Gastrocnemius medialis (tissue), 4 donors: ENCODE measurements at regions of chr1 and their contacts with region 1.

Region 1: GRCh38 chr1:39653546-39654031 is 14.1 kb upstream of the HEYL start:
- DNase-seq: peak; percentile 90 to 96
- ATAC-seq: peak; percentile 94 to 95
- H3K4me3 ChIP-seq: no peak overlapping the region
- H3K27ac ChIP-seq: peak overlapping the region; percentile 76 to 85 (median 80)
- H3K4me1 ChIP-seq: peaks cover 22 to 32% of the 10 kb centered on the region in 2 donors
- H3K27me3 ChIP-seq: no peaks in the 10 kb centered on the region
- CTCF ChIP-seq: peak; percentile 94 to 96 (median 96)
- POLR2A ChIP-seq: no peak

Region 2: GRCh38 chr1:39446986-39447567 is 206.5 kb before region 1 on chr1:
- in situ Hi-C with region 1: no loop called
- intact Hi-C with region 1: no loop called
- DNase-seq: no peak
- ATAC-seq: no peak
- H3K4me3 ChIP-seq: no peak overlapping the region
- H3K27ac ChIP-seq: no peak overlapping the region
- H3K4me1 ChIP-seq: no peaks in the 10 kb centered on the region
- H3K27me3 ChIP-seq: no peaks in the 10 kb centered on the region
- CTCF ChIP-seq: no peak
- POLR2A ChIP-seq: no peak

Region 3: DNA sequence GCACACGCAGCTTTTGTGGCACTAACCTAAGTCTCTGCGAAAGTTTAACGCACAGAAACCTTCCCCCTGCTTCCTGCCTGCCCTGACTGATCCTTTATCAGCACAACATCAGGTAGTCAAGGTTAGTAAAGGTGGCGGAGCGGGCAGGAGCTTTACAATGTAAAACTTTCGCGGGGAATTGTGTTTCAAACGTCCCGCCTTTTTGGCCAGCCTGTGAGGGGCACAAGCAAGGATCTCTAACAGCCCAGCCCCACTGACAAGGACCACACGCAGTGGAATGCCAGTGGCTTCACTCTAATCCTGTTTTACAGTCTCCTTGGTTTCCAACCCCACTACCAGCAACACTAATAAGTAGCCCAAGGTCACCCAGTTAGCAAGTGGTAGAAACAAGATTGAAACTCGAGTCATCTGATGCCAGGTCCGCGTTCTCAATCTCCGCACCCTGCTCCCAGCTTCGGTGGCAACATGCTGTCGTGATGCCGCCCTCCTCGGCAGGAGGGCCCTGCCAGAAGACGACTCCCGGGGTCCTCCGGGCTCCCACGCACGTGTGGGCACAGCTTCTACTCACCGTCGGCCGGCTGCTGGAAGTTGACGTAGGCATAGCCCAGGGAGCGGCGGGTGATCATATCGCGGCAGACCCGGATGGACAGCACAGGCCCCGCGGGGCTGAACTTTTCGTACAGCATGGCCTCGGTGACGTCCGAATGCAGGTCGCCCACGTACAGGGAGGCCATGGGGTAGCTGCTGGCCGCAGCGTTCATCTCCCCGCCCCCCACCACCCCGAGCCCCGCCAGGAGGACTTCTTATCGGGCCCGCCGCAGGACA is 78.2 kb before region 1 on chr1:
- in situ Hi-C with region 1: no loop called
- intact Hi-C with region 1: loop called (anchors 1 kb)
- DNase-seq: peak; percentile 63 to 69
- ATAC-seq: peak; percentile 9 to 28
- H3K4me3 ChIP-seq: peak overlapping the region; percentile 70 to 96 (median 78)
- H3K27ac ChIP-seq: peak overlapping the region; percentile 93 to 99 (median 96)
- H3K4me1 ChIP-seq: peaks cover 33% of the 10 kb centered on the region in 2 donors
- H3K27me3 ChIP-seq: no peaks in the 10 kb centered on the region
- CTCF ChIP-seq: no peak
- POLR2A ChIP-seq: peak in 1 of 2 donors; percentile 39

Region 4: DNA sequence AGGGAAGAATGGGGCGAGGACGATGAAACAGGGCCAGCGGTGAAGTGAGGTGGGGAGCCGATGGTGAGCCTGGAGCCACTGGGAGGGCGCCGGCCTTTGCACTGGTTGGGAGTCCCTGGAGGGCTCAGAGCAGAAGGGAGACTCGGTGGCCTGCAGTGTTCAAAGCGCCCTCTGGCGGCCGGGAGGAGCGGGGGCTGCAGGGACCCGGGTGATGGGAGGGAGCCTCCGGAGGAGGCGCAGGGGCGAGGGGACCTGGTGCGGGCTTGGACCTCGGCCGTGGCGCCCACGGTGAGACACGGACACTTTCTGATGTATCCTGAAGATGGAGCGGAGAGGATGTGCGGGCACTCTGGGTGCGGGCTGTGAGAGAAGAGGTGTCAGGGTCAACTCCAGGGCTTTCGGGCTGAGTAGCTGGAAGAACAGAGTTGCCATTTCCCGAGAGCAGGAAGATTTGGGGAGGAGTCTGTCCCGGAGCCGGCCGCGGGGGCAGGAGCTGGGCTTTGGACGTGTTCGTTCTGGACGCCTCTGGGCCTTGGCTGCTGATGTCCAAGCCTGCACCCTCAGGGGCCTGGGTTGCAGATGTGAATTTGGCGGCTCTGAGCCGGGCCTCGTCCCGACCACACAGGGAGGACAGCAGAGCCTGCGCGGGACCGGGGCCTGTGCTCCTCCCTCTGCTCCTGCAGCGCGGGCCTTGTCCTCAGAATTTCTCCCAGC is 43.8 kb before region 1 on chr1:
- in situ Hi-C with region 1: loop called (anchors 5 to 10 kb)
- intact Hi-C with region 1: loop called (anchors 1 kb)
- DNase-seq: peak; percentile 7 to 24
- ATAC-seq: no peak
- H3K4me3 ChIP-seq: no peak overlapping the region
- H3K27ac ChIP-seq: peak overlapping the region in 1 of 4 donors; percentile 1
- H3K4me1 ChIP-seq: peaks cover 0 to 4% of the 10 kb centered on the region in 2 donors
- H3K27me3 ChIP-seq: no peaks in the 10 kb centered on the region
- CTCF ChIP-seq: peak in 4 of 5 experiments; percentile 52 to 77 (median 68)
- POLR2A ChIP-seq: no peak

Region 5: DNA sequence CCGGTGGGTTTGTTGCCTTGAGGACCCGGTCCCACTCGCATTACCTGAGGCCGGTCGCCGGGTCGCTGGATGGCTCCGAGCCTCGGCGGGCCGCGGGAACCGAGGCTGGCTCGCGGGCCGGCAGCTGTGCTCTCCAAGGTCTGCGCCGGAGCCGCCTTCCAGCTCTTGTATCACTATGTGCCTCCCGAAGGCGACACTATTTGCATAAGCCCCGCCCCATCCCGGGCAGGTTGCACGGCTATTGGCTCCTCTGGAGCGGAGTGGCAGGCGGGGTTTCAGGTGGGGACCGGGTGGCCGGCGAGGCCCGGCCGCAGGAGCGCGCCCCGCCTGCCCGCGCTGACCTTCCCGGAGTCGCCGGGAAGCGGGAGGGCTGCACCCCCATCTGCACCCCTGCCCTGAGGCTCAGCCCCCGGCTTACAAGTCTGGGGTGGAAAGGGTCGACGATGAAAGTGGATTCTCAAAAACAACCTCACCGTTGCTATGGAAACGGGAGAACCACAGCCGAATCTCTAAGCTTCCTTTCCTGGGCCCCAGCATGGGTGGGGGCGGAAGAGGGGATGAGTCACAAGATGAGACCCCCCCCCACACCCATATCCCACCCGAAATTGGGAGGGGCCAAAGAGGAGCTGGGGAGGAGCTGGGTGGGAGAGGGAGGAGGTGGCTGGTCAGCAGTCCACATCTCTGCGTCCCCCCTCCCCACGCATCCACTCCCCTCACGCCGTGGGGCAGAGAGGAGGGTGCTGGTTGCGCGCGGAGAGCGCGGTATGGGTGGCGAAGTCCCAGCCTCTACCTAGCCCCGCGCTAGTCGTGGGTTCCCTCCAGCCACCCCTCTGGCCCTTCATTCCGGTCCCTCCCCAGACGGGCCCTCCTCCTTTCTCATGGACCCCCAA is 37.9 kb after region 1 on chr1 and contains the start of gene HPCAL4:
- in situ Hi-C with region 1: no loop called
- intact Hi-C with region 1: loop called (anchors 1 kb)
- DNase-seq: peak; percentile 91 to 95
- ATAC-seq: peak; percentile 62 to 66
- H3K4me3 ChIP-seq: peak within 1 kb of the TSS; percentile 47 to 60 (median 51)
- H3K27ac ChIP-seq: peak within 1 kb of the TSS in 3 of 4 donors; percentile 39 to 99 (median 91)
- H3K4me1 ChIP-seq: peaks cover 40 to 44% of the 10 kb centered on the region in 2 donors
- H3K27me3 ChIP-seq: peaks cover 0 to 3% (median 0%) of the 10 kb centered on the region in 3 donors
- CTCF ChIP-seq: no peak
- POLR2A ChIP-seq: peak; percentile 80 to 89
- total RNA-seq, gene HPCAL4: 0.92 to 9.0 (median 3.2) TPM

Region 6: GRCh38 chr1:39720094-39720999 is 66.8 kb after region 1 on chr1:
- in situ Hi-C with region 1: loop called in 1 of 4 experiments (anchors 5 kb)
- intact Hi-C with region 1: loop called (anchors 1 kb)
- DNase-seq: peak; percentile 42 to 46
- ATAC-seq: peak; percentile 98 to 99
- H3K4me3 ChIP-seq: no peak overlapping the region
- H3K27ac ChIP-seq: peak overlapping the region; percentile 60 to 71 (median 64)
- H3K4me1 ChIP-seq: no peaks in the 10 kb centered on the region
- H3K27me3 ChIP-seq: peaks cover 0 to 5% (median 0%) of the 10 kb centered on the region in 3 donors
- CTCF ChIP-seq: peak; percentile 69 to 96 (median 77)
- POLR2A ChIP-seq: no peak